Activated T-helper 2 cell treated with anti-CD3 and anti-CD28 coated beads, Interferon-gamma antibody, Interleukin-2, Interleukin-4, amounts not matched to agents 10 μg/mL and 5 μg/mL and 100 μg/mL, durations not matched to agents 14 hours and 24 hours and 36 hours (primary cell): ENCODE measurements at regions of chr1 and their contacts with region 1.

Region 1: GRCh38 chr1:85078903-85079302 is 30.6 kb upstream of the MCOLN3 start:
- DNase-seq: no peak
- H3K4me3 Mint-ChIP-seq: no peak overlapping the region
- H3K27ac Mint-ChIP-seq: no peak overlapping the region
- H3K4me1 Mint-ChIP-seq: peaks cover 16% of the 10 kb centered on the region
- H3K27me3 Mint-ChIP-seq: peaks cover 29% of the 10 kb centered on the region

Region 2: DNA sequence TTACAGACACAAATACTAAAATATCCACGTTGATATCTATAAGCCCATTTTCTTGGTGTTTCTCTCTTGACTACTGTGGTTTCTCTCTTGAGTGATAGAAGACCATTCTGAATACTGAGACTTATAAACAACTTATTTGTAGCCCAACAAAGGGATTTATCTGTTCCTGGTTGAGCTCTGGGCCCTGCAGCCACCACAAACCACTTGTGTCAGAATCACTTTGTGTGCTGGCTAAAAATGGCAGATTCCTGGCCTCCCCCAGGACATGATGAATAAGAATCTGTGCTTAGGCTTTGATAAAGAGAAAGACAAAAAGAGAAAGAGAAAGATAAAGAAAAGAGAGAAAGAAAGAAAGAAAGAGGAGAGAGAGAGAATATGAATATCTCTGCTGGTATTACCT is 63.1 kb before region 1 on chr1:
- intact Hi-C with region 1: no loop called
- DNase-seq: no peak
- H3K4me3 Mint-ChIP-seq: no peak overlapping the region
- H3K27ac Mint-ChIP-seq: no peak overlapping the region
- H3K4me1 Mint-ChIP-seq: peaks cover 10% of the 10 kb centered on the region
- H3K27me3 Mint-ChIP-seq: peaks cover 13% of the 10 kb centered on the region

Region 3: DNA sequence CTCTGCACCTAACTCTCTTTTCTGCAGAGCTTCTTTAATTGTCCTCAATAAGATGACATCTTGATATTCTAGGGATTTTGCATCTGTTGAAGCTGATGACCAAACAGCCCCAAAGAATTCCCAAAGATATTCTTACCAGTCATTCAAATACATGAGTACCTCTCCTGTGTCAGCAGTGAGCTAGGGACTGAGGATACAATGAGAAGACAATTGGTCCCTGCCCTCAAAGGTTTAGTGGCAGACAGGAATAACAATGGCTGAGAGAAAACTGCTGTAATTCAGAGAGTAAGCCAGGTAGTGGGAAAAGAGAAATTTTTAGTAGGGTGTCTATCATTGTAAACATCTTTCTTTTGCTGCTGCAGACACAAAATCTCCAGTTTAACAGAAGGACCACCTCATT is 36.5 kb before region 1 on chr1:
- intact Hi-C with region 1: loop called (anchors 5 kb)
- DNase-seq: no peak
- H3K4me3 Mint-ChIP-seq: no peak overlapping the region
- H3K27ac Mint-ChIP-seq: no peak overlapping the region
- H3K4me1 Mint-ChIP-seq: peaks cover 3% of the 10 kb centered on the region
- H3K27me3 Mint-ChIP-seq: peaks cover 63% of the 10 kb centered on the region